ENCODE measurements at regions of chr1 and their contacts with region 1.

Region 1: GRCh38 chr1:59296358-59297256 is at the start of gene FGGY:
- DNase-seq: peak; percentile 98
- H3K4me3 ChIP-seq: peak within 1 kb of the TSS; percentile 73
- H3K27ac ChIP-seq: peak within 1 kb of the TSS; percentile 99
- H3K4me1 ChIP-seq: peaks cover 47% of the 10 kb centered on the region
- H3K27me3 ChIP-seq: no peaks in the 10 kb centered on the region
- CTCF ChIP-seq: no peak
- total RNA-seq, gene FGGY: 31.2 TPM

Region 2: DNA sequence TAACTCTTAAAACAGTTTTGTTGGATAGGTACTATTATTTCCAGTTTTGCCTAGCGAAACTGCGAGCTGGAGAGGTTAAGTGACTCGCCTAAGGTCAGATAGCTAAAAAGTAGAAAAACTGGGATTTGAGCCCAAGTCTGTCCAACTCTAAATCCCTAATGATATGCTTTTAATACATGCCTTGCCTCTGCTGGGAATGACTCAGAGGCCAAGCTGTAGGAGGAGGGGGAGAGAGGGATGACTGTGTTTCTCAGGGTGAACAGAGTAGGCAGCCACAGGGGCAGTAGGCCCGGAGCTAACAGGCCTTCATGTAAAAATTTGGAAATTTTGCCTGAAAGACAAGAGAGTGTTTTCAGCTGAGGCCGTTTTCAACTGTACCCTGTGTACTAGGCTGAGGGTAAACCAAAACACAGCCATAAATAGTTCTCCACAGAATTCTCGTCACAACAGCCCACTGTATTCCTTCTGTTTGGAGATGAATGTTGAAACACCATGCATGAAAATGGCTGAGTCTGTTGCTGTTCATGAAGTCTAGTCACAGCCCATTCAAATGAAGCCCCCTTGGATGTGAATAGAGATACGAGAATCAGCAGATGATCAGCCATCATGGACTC is 410.7 kb after region 1 on chr1:
- intact Hi-C with region 1: loop called (anchors 10 kb)
- DNase-seq: peak; percentile 39
- H3K4me3 ChIP-seq: no peak overlapping the region
- H3K27ac ChIP-seq: peak overlapping the region; percentile 77
- H3K4me1 ChIP-seq: peaks cover 65% of the 10 kb centered on the region
- H3K27me3 ChIP-seq: no peaks in the 10 kb centered on the region
- CTCF ChIP-seq: no peak